ENCODE measurements at regions of chr5 and their contacts with region 1.

Region 1: GRCh38 chr5:36414869-36415282 is 113.2 kb upstream of the RANBP3L start:
- DNase-seq: no peak
- H3K4me3 ChIP-seq: no peak overlapping the region
- H3K27ac ChIP-seq: no peak overlapping the region
- H3K4me1 ChIP-seq: peaks cover 0 to 6% (median 0%) of the 10 kb centered on the region in 6 donors
- H3K27me3 ChIP-seq: no peaks in the 10 kb centered on the region
- CTCF ChIP-seq: peak in 3 of 11 experiments; percentile 28 to 43 (median 39)
- POLR2A ChIP-seq: no peak

Region 2: DNA sequence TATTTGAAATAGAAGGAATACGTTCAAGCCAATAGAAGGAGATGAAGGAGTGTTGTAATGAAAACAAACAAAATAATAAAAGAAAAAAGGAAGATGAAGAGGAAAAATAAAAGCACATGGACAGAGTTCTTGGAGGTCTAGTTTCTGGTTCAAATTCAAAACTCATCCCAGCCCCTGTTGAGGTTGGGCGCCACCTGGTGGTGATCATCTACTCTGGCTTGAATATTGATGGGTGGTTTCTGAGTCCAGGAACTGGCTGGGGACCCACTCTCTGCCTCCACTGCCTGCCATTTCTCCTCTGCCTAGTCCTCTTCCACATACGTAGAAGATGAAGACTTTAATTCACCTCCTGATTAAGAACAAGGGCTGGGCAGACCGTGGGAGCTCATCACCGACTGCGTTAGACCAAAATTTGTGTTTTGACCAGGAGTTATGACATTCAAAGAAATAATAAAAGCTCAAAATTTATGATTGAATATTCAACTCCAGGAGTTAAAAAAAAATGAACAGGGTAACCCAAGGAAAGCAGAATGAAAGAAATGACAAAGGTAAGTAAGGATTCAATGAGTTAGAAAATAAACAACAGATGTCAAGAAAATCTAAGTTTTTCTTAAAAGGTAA is 92.6 kb after region 1 on chr5:
- intact Hi-C with region 1: loop called (anchors 5 kb)
- DNase-seq: peak; percentile 90
- H3K4me3 ChIP-seq: no peak overlapping the region
- H3K27ac ChIP-seq: no peak overlapping the region
- H3K4me1 ChIP-seq: peaks cover 0 to 5% (median 0%) of the 10 kb centered on the region in 6 donors
- H3K27me3 ChIP-seq: peaks cover 0 to 10% (median 0%) of the 10 kb centered on the region in 7 donors
- CTCF ChIP-seq: peak; percentile 32 to 80 (median 69)
- POLR2A ChIP-seq: no peak

Region 3: GRCh38 chr5:36690041-36690961 is 275.4 kb after region 1 on chr5:
- intact Hi-C with region 1: loop called (anchors 10 kb)
- DNase-seq: peak; percentile 95
- H3K4me3 ChIP-seq: peak overlapping the region; percentile 34 to 64 (median 50)
- H3K27ac ChIP-seq: peak overlapping the region; percentile 1 to 81 (median 56)
- H3K4me1 ChIP-seq: peaks cover 5 to 58% (median 31%) of the 10 kb centered on the region in 6 donors
- H3K27me3 ChIP-seq: peaks cover 0 to 16% (median 5%) of the 10 kb centered on the region in 7 donors
- CTCF ChIP-seq: peak; percentile 10 to 91 (median 85)
- POLR2A ChIP-seq: no peak

Region 4: GRCh38 chr5:36728697-36729543 is 314.0 kb after region 1 on chr5:
- intact Hi-C with region 1: no loop called
- DNase-seq: no peak
- H3K4me3 ChIP-seq: no peak overlapping the region
- H3K27ac ChIP-seq: no peak overlapping the region
- H3K4me1 ChIP-seq: peaks cover 0 to 28% (median 17%) of the 10 kb centered on the region in 6 donors
- H3K27me3 ChIP-seq: no peaks in the 10 kb centered on the region
- CTCF ChIP-seq: peak; percentile 13 to 77 (median 54)
- POLR2A ChIP-seq: no peak